HepG2 (cell line): ENCODE measurements at regions of chr11 and their contacts with region 1.

Region 1: GRCh38 chr11:15867871-15868270 is 488.5 kb downstream of the SOX6 start:
- DNase-seq: no peak
- ATAC-seq: no peak
- H3K4me3 ChIP-seq: no peak overlapping the region
- H3K27ac ChIP-seq: no peak overlapping the region
- H3K4me1 ChIP-seq: no peaks in the 10 kb centered on the region
- H3K27me3 ChIP-seq: no peaks in the 10 kb centered on the region
- CTCF ChIP-seq: no peak
- EP300 ChIP-seq: no peak
- POLR2A ChIP-seq: no peak
- RAD21 ChIP-seq: no peak

Region 2: GRCh38 chr11:15923183-15923582 is 55.3 kb after region 1 on chr11:
- CTCF ChIA-PET with region 1: no interaction called
- POLR2A ChIA-PET with region 1: no interaction called
- in situ Hi-C with region 1: no loop called
- intact Hi-C with region 1: loop called (anchors 2 kb)
- DNase-seq: no peak
- ATAC-seq: no peak
- H3K4me3 ChIP-seq: no peak overlapping the region
- H3K27ac ChIP-seq: no peak overlapping the region
- H3K4me1 ChIP-seq: no peaks in the 10 kb centered on the region
- H3K27me3 ChIP-seq: no peaks in the 10 kb centered on the region
- CTCF ChIP-seq: 0 out of 2 replicates have a peak, but pooled peaks have one; percentile 4
- EP300 ChIP-seq: no peak
- POLR2A ChIP-seq: no peak
- RAD21 ChIP-seq: no peak